ENCODE measurements at regions of chrX and their contacts with region 1.

Region 1: DNA sequence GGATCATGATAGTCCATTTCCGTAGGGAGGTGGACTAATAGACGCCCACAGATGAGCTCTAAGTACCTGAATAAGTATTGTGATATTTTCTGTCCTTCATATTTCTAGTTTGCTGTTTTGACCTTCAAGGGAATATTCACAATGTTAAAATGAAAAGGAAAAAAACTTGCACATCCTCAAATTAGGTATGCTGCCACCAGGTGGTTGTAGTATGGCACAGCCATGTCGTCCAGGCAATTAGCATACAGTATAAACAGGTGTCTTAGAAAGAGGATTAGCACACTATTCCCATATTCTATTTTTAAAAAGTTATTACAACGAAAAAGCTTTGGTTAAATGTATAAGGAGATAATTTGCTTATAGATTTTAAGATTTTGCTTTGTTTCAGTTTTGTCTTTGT is 802.0 kb downstream of the RPA4 start:
- DNase-seq: peak; percentile 16
- ATAC-seq: no peak
- H3K4me3 ChIP-seq: no peak overlapping the region
- H3K4me3 Mint-ChIP-seq: no peak overlapping the region
- H3K27ac ChIP-seq: no peak overlapping the region
- H3K27ac Mint-ChIP-seq: no peak overlapping the region
- H3K4me1 ChIP-seq: no peaks in the 10 kb centered on the region
- H3K4me1 Mint-ChIP-seq: no peaks in the 10 kb centered on the region
- H3K27me3 ChIP-seq: no peaks in the 10 kb centered on the region
- H3K27me3 Mint-ChIP-seq: no peaks in the 10 kb centered on the region
- CTCF ChIP-seq: peak; percentile 48

Region 2: DNA sequence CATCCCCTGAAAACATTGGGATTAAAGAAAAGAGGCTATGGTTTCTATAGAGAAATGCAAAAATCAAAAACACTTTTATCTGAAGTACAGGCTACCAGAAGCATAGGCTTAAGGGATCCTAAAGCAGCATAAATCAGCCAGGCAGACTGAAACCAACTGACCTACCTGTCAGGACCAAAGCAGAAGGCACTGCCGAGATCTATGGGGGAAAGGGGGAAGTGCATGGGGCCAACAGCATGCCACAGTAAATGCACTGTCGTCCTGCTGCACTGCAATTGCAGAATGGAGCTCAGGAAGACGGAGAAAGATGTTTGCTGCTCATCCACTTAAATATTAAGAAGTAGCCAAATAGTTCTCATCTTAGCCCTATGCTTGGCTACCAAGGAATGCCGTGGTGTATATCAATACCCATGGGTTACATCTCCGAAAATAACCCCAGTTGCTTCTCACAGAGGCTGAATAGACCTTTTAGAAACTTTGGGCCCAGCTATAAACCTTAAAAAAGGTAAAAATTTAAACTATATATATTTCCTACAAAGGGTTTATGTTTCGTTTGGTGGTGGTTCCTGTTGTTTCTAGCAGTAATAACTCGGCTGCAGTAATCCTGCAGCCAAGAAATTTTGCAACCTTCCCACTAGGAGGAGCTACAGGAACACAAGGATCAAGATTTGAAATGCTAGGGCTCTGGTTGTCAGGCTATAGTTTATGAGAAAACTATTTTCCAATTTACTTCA is 1313.3 kb before region 1 on chrX:
- CTCF ChIA-PET with region 1: no interaction called
- POLR2A ChIA-PET with region 1: no interaction called
- intact Hi-C with region 1: loop called (anchors 5 kb)
- DNase-seq: peak; percentile 1
- ATAC-seq: no peak
- H3K4me3 ChIP-seq: no peak overlapping the region
- H3K4me3 Mint-ChIP-seq: no peak overlapping the region
- H3K27ac ChIP-seq: no peak overlapping the region
- H3K27ac Mint-ChIP-seq: no peak overlapping the region
- H3K4me1 ChIP-seq: no peaks in the 10 kb centered on the region
- H3K4me1 Mint-ChIP-seq: no peaks in the 10 kb centered on the region
- H3K27me3 ChIP-seq: no peaks in the 10 kb centered on the region
- H3K27me3 Mint-ChIP-seq: no peaks in the 10 kb centered on the region
- CTCF ChIP-seq: no peak

Region 3: GRCh38 chrX:96770315-96770714 is 915.4 kb before region 1 on chrX:
- CTCF ChIA-PET with region 1: interaction called, 11 read pairs
- POLR2A ChIA-PET with region 1: no interaction called
- intact Hi-C with region 1: no loop called
- DNase-seq: peak; percentile 18
- ATAC-seq: no peak
- H3K4me3 ChIP-seq: no peak overlapping the region
- H3K4me3 Mint-ChIP-seq: no peak overlapping the region
- H3K27ac ChIP-seq: no peak overlapping the region
- H3K27ac Mint-ChIP-seq: no peak overlapping the region
- H3K4me1 ChIP-seq: no peaks in the 10 kb centered on the region
- H3K4me1 Mint-ChIP-seq: peaks cover 2% of the 10 kb centered on the region
- H3K27me3 ChIP-seq: no peaks in the 10 kb centered on the region
- H3K27me3 Mint-ChIP-seq: no peaks in the 10 kb centered on the region
- CTCF ChIP-seq: peak; percentile 72

Region 4: GRCh38 chrX:97790850-97791249 is 105.1 kb after region 1 on chrX:
- CTCF ChIA-PET with region 1: no interaction called
- POLR2A ChIA-PET with region 1: no interaction called
- intact Hi-C with region 1: no loop called
- DNase-seq: no peak
- ATAC-seq: no peak
- H3K4me3 ChIP-seq: no peak overlapping the region
- H3K4me3 Mint-ChIP-seq: no peak overlapping the region
- H3K27ac ChIP-seq: no peak overlapping the region
- H3K27ac Mint-ChIP-seq: no peak overlapping the region
- H3K4me1 ChIP-seq: no peaks in the 10 kb centered on the region
- H3K4me1 Mint-ChIP-seq: no peaks in the 10 kb centered on the region
- H3K27me3 ChIP-seq: no peaks in the 10 kb centered on the region
- H3K27me3 Mint-ChIP-seq: no peaks in the 10 kb centered on the region
- CTCF ChIP-seq: no peak

Measured in B cell (primary cell).